ENCODE measurements at regions of chrX and their contacts with region 1.

Region 1: GRCh38 chrX:26651755-26652154 is 435.8 kb downstream of the MAGEB5 start:
- DNase-seq: peak; percentile 2
- H3K4me3 ChIP-seq: no peak overlapping the region
- H3K27ac ChIP-seq: no peak overlapping the region
- H3K4me1 ChIP-seq: no peaks in the 10 kb centered on the region
- H3K27me3 ChIP-seq: no peaks in the 10 kb centered on the region
- CTCF ChIP-seq: peak; percentile 41

Region 2: DNA sequence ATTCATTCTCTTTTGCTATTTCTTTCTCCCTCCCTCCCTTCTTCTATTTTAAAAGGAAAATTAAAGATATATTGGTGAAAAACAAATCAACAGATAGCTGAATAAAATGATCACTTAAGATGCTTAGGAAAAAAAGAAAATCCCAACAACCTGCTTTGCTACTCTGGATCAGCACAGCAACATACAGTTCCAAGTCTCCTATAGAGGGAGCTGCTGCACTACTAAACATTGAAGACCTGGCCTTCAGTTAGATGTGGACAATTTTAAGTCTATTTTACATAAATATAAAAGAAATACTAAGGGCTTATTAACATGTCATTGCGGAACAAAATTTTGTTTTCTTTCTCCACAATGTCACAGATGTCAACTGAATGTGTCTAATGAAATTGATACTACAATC is 209.4 kb before region 1 on chrX:
- CTCF ChIA-PET with region 1: no interaction called
- POLR2A ChIA-PET with region 1: no interaction called
- intact Hi-C with region 1: no loop called
- DNase-seq: no peak
- H3K4me3 ChIP-seq: no peak overlapping the region
- H3K27ac ChIP-seq: no peak overlapping the region
- H3K4me1 ChIP-seq: no peaks in the 10 kb centered on the region
- H3K27me3 ChIP-seq: no peaks in the 10 kb centered on the region
- CTCF ChIP-seq: peak; percentile 54

Region 3: DNA sequence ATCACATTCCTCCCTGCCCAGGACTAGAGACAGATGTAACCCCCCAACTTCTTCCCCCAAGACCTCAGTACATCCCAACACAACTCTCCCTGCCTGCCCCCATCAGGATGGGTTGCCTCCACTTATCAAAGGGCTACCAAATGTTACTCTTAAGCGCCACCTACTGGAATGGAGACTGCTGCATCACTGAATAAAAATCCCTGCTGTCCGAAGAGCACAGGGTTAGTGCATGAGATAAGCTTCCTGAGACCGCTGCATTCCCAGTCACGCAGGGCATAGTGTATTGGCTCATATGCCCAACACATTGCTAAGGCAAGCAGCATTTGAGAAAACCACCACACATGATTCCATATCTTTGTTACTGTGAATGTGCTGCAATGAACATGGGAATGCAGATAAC is 266.9 kb after region 1 on chrX:
- CTCF ChIA-PET with region 1: no interaction called
- POLR2A ChIA-PET with region 1: no interaction called
- intact Hi-C with region 1: loop called (anchors 2 kb)
- DNase-seq: peak; percentile 63
- H3K4me3 ChIP-seq: no peak overlapping the region
- H3K27ac ChIP-seq: no peak overlapping the region
- H3K4me1 ChIP-seq: no peaks in the 10 kb centered on the region
- H3K27me3 ChIP-seq: no peaks in the 10 kb centered on the region
- CTCF ChIP-seq: peak; percentile 72

Region 4: DNA sequence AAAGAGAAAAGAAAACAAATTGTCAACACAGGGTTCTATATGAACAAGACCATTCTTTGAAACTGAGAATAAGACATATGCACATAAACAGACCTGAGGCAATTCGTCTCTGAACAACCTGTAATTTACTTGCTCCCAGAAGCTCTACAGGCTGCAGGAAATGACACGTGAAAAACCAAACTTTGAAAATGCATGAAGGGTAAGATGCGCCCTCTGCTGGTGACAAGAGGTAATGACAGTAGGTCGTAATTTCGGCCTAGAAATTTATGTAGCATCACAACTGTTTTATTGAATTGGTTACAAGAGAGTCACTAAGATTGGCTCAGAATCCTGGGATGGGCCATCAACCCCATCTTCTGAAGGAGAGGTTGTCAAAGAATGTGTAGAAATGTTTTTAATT is 534.9 kb after region 1 on chrX:
- CTCF ChIA-PET with region 1: no interaction called
- POLR2A ChIA-PET with region 1: no interaction called
- intact Hi-C with region 1: loop called (anchors 5 kb)
- DNase-seq: peak; percentile 61
- H3K4me3 ChIP-seq: no peak overlapping the region
- H3K27ac ChIP-seq: no peak overlapping the region
- H3K4me1 ChIP-seq: no peaks in the 10 kb centered on the region
- H3K27me3 ChIP-seq: no peaks in the 10 kb centered on the region
- CTCF ChIP-seq: peak; percentile 84

Region 5: DNA sequence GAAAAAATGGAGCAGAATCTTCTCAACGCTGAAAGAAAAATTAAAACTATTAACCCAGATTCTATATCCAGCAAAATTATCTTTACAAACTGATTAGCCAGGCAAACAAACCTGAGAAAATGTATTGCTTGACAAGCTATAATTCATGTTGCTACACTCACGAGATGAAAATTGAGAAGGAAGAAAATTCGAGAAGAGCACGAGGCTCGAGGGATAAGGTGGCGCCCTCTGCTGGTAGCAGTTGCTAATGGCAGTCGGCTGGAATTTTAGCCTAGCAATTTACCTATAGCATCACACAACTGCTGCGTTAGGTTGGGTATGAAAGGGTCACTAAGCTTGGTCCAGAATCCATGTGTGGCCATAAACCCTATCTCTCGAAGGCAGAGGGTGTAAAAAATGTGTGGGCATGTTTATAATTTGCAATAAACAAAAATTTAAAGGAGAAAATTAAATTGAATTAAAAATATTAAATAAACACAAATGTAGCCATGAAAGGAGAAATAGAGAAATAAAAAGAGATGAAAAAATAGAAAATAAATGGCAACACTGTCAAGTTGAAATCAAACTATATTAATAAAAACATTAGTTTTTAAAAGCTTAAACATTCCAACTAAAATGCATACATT is 684.8 kb after region 1 on chrX:
- CTCF ChIA-PET with region 1: no interaction called
- POLR2A ChIA-PET with region 1: no interaction called
- intact Hi-C with region 1: loop called (anchors 10 kb)
- DNase-seq: peak; percentile 45
- H3K4me3 ChIP-seq: no peak overlapping the region
- H3K27ac ChIP-seq: no peak overlapping the region
- H3K4me1 ChIP-seq: no peaks in the 10 kb centered on the region
- H3K27me3 ChIP-seq: no peaks in the 10 kb centered on the region
- CTCF ChIP-seq: peak; percentile 93